Activated CD4-positive, alpha-beta memory T cell treated with anti-CD3 and anti-CD28 coated beads for 36 hours (primary cell): ENCODE measurements at regions of chr16 and their contacts with region 1.

Region 1: DNA sequence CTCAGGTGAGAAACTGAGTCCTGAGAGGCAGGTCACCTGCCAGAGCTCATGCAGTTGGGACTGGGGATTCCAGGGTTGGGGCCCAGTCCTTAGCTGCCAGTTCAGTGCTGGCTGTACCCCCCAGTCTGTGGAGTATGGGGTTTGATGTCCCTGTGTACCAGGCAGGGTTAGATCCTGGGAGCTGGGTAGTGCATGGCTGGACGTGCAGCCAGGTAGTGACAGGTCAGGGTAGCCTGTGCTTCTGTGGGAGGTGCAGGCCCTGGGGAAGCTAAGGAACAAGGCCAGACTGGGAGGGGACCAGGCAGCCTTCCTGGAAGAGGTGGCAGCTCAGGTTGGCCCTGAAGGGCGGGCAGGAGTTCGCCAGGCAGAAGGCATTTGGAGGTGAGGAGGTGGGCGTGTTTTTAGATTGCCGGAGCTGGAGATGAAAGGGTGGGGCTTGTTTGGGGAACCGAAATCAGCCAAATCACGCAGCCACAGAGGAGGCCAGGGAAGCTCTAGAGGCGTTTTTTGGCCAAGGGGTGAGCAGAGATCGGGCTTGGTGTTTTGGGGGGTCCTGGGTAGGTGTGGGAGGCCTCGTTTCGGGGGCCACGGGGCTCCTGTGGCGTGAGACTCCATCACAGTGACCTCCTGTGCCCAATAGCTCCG is 7.5 kb downstream of the ADCY7 start:
- DNase-seq: peak; percentile 67
- H3K4me3 Mint-ChIP-seq: peak overlapping the region; percentile 94
- H3K27ac Mint-ChIP-seq: peak overlapping the region; percentile 99
- H3K4me1 Mint-ChIP-seq: peaks cover 91% of the 10 kb centered on the region
- H3K27me3 Mint-ChIP-seq: no peaks in the 10 kb centered on the region

Region 2: DNA sequence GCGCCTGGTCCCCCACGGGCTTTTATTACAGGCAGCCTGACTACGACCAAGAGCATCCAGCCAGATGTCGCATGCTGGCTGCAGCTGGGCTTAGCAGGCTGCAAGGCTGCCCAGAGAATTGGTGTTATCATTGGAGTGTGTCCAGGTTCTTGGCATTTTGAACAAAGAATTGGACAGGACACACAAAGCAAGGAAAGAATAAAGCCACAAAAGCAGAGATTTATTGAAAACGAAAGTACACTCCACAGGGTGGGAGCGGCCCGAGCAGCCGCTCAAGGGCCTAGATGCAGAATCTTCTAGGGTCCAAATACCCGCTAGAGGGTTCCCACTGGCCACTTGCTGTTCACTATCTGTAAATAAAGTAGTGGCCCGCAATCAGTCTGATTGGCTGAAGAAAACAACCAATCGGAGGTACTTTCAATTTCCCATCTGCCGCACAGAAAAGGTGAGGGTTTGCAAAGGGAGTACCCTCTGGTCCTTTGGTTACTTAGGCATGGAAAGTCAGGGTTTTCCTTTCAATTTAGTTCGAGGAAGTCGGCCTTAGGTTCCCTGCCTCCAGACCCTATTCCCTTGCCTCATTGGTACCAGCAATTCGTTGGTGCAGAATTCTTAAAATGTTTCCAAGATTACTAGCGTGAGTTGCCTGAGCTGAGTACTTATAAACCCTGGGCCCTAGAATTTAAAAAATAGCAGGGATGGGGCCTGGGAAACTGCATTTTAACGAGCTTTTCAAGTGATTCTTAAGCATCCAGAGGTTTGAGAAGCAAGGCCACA is 287.3 kb before region 1 on chr16:
- CTCF ChIA-PET with region 1: no interaction called
- POLR2A ChIA-PET with region 1: no interaction called
- intact Hi-C with region 1: no loop called
- DNase-seq: no peak
- H3K4me3 Mint-ChIP-seq: no peak overlapping the region
- H3K27ac Mint-ChIP-seq: no peak overlapping the region
- H3K4me1 Mint-ChIP-seq: peaks cover 6% of the 10 kb centered on the region
- H3K27me3 Mint-ChIP-seq: peaks cover 1% of the 10 kb centered on the region

Region 3: GRCh38 chr16:50152807-50153452 is 120.9 kb before region 1 on chr16 and contains the start of gene TENT4B:
- CTCF ChIA-PET with region 1: no interaction called
- POLR2A ChIA-PET with region 1: interaction called, 3 read pairs
- intact Hi-C with region 1: loop called (anchors 2 kb)
- DNase-seq: peak; percentile 90
- H3K4me3 Mint-ChIP-seq: peak within 1 kb of the TSS; percentile 80
- H3K27ac Mint-ChIP-seq: peak within 1 kb of the TSS; percentile 91
- H3K4me1 Mint-ChIP-seq: peaks cover 32% of the 10 kb centered on the region
- H3K27me3 Mint-ChIP-seq: no peaks in the 10 kb centered on the region
- total RNA-seq, gene TENT4B: 14.4 to 14.8 TPM

Region 4: GRCh38 chr16:50245417-50246298 is 28.1 kb before region 1 on chr16:
- CTCF ChIA-PET with region 1: interaction called, 4 read pairs
- POLR2A ChIA-PET with region 1: interaction called, 10 read pairs
- intact Hi-C with region 1: loop called (anchors 1 kb)
- DNase-seq: peak; percentile 82
- H3K4me3 Mint-ChIP-seq: peak overlapping the region; percentile 78
- H3K27ac Mint-ChIP-seq: peak overlapping the region; percentile 65
- H3K4me1 Mint-ChIP-seq: peaks cover 11% of the 10 kb centered on the region
- H3K27me3 Mint-ChIP-seq: no peaks in the 10 kb centered on the region

Region 5: DNA sequence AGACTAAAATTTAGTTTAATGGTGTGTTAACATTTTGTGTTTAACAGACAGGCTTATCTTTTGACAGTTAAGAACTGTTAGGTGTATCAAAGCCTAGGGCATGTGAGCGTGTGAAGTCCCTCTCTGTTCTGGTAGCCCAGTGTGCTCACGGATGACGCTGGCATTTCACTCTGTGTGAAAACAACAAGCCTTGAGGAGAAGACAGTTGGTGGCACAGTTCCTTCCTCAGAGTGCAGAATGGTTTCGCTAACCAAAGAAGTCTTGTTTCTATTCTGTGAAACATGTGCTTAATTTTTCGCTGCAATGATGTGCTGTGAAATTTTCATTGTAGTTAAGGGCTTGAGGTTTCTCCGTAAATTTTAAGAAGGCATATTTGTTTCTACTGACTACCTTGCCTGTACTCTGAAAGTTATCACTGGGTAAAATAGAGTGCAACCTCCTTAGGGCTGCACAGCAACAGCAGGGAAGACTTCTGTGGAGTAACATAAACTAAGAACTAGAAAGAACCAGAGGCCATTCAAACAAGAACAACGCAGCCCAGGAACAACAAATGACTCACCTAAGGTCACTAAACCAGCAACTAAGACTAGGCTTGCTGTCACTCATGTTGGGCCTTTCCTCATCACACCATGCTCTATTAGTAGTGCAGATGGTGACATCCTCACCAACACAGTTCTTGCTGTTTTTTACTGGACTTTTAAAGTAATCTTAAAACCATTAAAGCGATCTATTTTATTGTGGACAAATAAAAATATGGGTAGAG is 61.6 kb after region 1 on chr16:
- CTCF ChIA-PET with region 1: interaction called, 4 read pairs
- POLR2A ChIA-PET with region 1: interaction called, 10 read pairs
- intact Hi-C with region 1: loop called (anchors 1 kb)
- DNase-seq: peak; percentile 70
- H3K4me3 Mint-ChIP-seq: peak overlapping the region; percentile 32
- H3K27ac Mint-ChIP-seq: peak overlapping the region; percentile 90
- H3K4me1 Mint-ChIP-seq: peaks cover 68% of the 10 kb centered on the region
- H3K27me3 Mint-ChIP-seq: no peaks in the 10 kb centered on the region

Region 6: GRCh38 chr16:50681021-50681885 is 407.4 kb after region 1 on chr16 and contains the start of gene SNX20:
- CTCF ChIA-PET with region 1: no interaction called
- POLR2A ChIA-PET with region 1: no interaction called
- intact Hi-C with region 1: loop called (anchors 5 kb)
- DNase-seq: peak; percentile 79
- H3K4me3 Mint-ChIP-seq: peak within 1 kb of the TSS; percentile 89
- H3K27ac Mint-ChIP-seq: peak within 1 kb of the TSS; percentile 91
- H3K4me1 Mint-ChIP-seq: peaks cover 85% of the 10 kb centered on the region
- H3K27me3 Mint-ChIP-seq: no peaks in the 10 kb centered on the region
- total RNA-seq, gene SNX20: 55.4 to 56.9 TPM

Region 7: DNA sequence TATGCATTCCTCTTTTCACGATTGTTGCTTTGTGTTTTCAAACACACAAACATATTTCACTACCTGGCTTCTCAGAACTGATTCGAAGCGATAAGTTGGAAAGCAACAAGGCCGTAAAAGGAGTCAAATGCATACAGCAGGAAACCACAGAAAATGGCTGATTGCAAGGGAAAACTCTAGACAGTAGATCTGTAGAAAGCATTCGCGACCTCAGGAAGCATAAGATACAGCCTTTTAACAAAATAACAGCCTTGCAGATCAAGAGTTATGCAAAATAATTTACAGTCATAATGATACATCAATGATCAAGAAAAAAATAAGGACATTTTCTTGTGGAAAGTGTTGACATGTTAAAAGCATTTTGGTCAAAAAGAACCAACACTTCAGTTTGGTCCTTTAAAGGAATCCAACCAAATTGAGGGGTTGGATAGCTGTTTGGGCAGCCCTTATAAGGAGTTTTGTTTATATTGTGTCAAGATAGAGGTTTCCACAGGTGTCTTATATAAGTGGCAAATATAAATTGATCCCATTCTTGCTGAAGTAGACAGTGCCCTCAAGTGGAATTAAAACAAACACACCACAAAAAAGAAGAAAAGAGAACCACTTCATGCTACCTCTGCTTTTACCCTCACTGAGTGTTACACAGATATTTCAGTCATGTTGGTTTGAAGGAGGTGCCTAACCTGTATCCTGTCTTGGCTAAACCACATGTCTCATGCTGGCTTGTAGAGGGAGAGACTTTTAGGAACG is 473.6 kb after region 1 on chr16:
- CTCF ChIA-PET with region 1: interaction called, 5 read pairs
- POLR2A ChIA-PET with region 1: no interaction called
- intact Hi-C with region 1: loop called (anchors 5 kb)
- DNase-seq: no peak
- H3K4me3 Mint-ChIP-seq: peak overlapping the region; percentile 73
- H3K27ac Mint-ChIP-seq: peak overlapping the region; percentile 97
- H3K4me1 Mint-ChIP-seq: peaks cover 64% of the 10 kb centered on the region
- H3K27me3 Mint-ChIP-seq: no peaks in the 10 kb centered on the region

Region 8: GRCh38 chr16:50781043-50781442 is 507.2 kb after region 1 on chr16:
- CTCF ChIA-PET with region 1: no interaction called
- POLR2A ChIA-PET with region 1: no interaction called
- intact Hi-C with region 1: loop called (anchors 5 kb)
- DNase-seq: peak; percentile 50
- H3K4me3 Mint-ChIP-seq: peak overlapping the region; percentile 33
- H3K27ac Mint-ChIP-seq: peak overlapping the region; percentile 78
- H3K4me1 Mint-ChIP-seq: peaks cover 70% of the 10 kb centered on the region
- H3K27me3 Mint-ChIP-seq: no peaks in the 10 kb centered on the region